HEK293T (cell line): ENCODE measurements at regions of chr9 and their contacts with region 1.

Region 1: DNA sequence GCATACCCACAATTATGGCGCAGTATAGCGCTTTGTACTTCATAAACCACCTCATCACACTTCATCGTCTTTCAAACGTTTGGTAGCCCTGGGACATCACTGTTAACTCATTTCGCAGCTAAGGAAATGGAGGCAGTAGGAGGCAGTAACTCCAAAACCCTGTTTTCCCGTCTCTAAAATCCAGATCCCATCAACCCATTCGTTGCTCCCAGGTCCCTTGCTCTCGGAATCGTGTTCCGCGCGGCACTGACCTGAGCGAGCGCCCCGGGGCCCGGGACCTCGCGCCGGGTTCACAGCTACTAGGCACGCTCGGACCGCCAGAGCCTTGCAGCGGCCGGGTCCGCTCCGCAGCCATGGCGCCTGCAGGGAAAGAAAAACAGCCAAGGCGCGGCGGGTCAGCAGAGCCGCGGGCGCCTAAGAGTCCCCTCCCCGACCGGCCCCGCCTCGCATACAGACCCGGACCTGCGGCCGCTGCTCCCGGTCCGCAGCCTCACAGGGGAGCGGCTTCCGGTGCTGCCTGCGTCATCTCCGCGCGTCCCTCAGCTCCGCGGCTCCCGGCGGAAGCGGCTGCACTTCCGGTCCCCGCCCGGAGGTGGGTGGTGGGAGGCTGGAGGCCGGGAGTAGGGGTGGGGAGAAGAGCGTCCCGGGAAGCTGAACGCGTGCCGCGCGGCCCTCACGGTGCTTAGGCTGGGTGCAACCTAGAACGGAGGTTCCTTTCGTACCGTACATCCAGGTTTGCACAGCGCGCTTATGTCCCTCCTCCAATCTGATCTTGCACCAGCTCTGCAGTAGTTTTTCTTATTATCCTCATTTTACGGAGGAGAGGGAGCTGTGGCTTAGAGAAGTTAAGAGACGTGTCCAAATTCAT is at the start of gene FBXW2:
- DNase-seq: peak; percentile 95

Region 2: GRCh38 chr9:120742951-120743416 is 50.1 kb before region 1 on chr9:
- CTCF ChIA-PET with region 1: no interaction called
- POLR2A ChIA-PET with region 1: no interaction called
- DNase-seq: peak; percentile 70

Region 3: DNA sequence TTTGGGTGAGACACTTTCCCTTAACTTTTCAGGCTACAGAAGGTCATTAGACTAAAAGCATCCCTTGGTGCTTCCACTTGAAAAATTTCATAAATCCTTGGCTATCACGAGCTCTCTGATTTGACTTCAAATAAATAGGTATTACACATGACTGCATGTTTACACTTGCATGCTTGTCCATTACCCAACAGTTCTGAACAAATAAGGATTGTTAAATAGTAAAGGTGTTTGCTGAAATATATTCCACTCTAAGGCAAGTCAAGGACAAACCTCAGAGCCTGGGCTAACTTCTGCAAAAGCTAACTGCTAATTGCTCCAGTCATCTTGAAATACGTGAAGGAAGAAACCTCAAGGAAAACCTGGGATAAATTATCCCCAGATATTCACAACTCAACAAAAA is 14.4 kb before region 1 on chr9:
- CTCF ChIA-PET with region 1: interaction called, 7 read pairs
- POLR2A ChIA-PET with region 1: interaction called, 10 read pairs
- DNase-seq: no peak

Region 4: DNA sequence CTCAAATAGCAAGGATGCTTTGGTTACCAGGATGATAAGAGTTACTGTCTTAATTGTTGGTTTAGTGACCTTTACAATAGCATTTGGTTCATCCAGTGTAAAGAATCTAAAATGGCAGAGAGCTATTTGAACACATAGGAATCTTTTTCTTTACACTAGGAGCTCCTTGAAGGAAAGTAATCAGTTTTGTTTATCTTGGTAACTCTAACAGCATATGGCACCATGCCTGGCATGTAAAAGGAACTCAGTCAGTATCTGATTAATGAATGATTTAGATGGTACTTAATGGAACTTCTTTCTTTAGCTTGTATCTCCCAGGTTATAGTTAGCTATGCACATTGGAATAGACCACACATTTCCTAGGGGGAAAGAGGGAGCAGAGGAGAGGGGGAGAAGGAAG is 39.7 kb after region 1 on chr9:
- CTCF ChIA-PET with region 1: no interaction called
- POLR2A ChIA-PET with region 1: interaction called, 10 read pairs
- DNase-seq: no peak

Region 5: GRCh38 chr9:120868676-120869359 is 75.7 kb after region 1 on chr9:
- CTCF ChIA-PET with region 1: no interaction called
- POLR2A ChIA-PET with region 1: interaction called, 15 read pairs
- DNase-seq: peak; percentile 96

Region 6: DNA sequence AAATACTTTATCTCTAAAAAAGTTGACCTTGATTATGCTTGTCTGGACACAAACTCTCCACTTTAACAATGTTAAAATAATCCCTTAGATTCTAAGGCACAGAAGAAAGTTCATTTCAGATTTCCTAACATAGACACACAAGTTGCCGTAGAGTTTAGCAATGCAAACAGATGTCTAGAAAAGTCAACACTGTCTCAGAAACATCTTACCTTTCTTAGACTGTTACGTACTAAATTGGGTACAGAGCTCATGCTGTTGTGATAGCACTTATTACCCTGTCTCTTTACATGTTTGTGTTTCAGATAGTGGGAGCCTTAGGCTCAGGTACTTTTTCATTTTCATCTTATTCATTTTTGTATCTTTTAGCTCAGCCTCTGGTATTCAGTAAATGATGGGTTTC is 205.0 kb after region 1 on chr9:
- CTCF ChIA-PET with region 1: no interaction called
- POLR2A ChIA-PET with region 1: no interaction called
- DNase-seq: no peak